Heart left ventricle (tissue), 16 donors: ENCODE measurements at regions of chr3 and their contacts with region 1.

Region 1: GRCh38 chr3:64213962-64214379 is 11.3 kb downstream of the PRICKLE2 start:
- DNase-seq: peak; percentile 75 to 87 (median 79)
- ATAC-seq: peak; percentile 27 to 58 (median 50)
- H3K4me3 ChIP-seq: peak overlapping the region in 9 of 12 donors; percentile 10 to 48 (median 38)
- H3K27ac ChIP-seq: peak overlapping the region; percentile 26 to 84 (median 74)
- H3K4me1 ChIP-seq: peaks cover 3 to 87% (median 50%) of the 10 kb centered on the region in 12 donors
- H3K27me3 ChIP-seq: no peaks in the 10 kb centered on the region
- CTCF ChIP-seq: no peak
- POLR2A ChIP-seq: no peak

Region 2: GRCh38 chr3:64163755-64164148 is 50.2 kb before region 1 on chr3:
- intact Hi-C with region 1: loop called in 2 of 10 experiments (anchors 10 kb)
- DNase-seq: no peak
- ATAC-seq: no peak
- H3K4me3 ChIP-seq: no peak overlapping the region
- H3K27ac ChIP-seq: peak overlapping the region in 1 of 12 donors; percentile 66
- H3K4me1 ChIP-seq: peaks cover 0 to 58% (median 24%) of the 10 kb centered on the region in 12 donors
- H3K27me3 ChIP-seq: no peaks in the 10 kb centered on the region
- CTCF ChIP-seq: no peak
- POLR2A ChIP-seq: no peak